Mammary epithelial cell (primary cell): ENCODE measurements at regions of chr16 and their contacts with region 1.

Region 1: DNA sequence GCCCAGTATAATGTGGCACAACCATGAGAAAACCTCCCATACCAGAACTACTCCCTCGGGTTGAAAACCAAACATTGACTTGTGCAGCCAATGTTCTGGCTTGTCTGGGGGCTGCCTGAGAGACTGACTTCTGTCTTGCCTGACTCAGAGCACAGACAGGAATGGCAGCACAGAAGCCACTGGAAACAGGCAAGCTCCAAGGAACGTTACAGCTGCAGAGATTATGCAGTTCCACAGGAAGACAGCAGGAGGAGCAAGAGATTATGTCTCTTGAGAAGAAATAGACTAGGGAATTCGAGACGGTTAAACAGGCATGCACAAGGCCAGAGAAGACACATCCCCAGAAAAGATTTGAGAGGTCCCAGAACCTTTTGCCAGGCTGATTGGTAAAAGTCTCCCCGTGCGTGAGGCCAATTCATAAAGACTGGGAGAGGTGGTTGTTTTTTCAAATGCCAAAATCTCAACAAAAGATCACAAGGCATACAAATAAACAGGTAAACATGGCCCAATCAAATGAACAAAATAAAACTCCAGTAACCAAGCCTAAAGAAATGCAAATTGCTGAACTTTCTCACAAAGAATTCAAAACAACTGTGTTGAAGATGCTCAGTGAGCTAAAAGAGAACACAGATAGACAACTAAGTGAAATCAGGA is 90.6 kb upstream of the CDH5 start:
- DNase-seq: peak; percentile 83
- H3K4me3 ChIP-seq: no peak overlapping the region
- H3K27ac ChIP-seq: no peak overlapping the region
- H3K4me1 ChIP-seq: peaks cover 52% of the 10 kb centered on the region
- H3K27me3 ChIP-seq: no peaks in the 10 kb centered on the region
- CTCF ChIP-seq: peak; percentile 82 to 84

Region 2: GRCh38 chr16:65884018-65884417 is 391.9 kb before region 1 on chr16:
- CTCF ChIA-PET with region 1: no interaction called
- dilution Hi-C with region 1: no loop called
- in situ Hi-C with region 1: no loop called
- intact Hi-C with region 1: loop called (anchors 5 kb)
- DNase-seq: peak; percentile 90
- H3K4me3 ChIP-seq: no peak overlapping the region
- H3K27ac ChIP-seq: peak overlapping the region; percentile 98
- H3K4me1 ChIP-seq: peaks cover 29% of the 10 kb centered on the region
- H3K27me3 ChIP-seq: no peaks in the 10 kb centered on the region
- CTCF ChIP-seq: no peak

Region 3: GRCh38 chr16:66315210-66315825 is 39.4 kb after region 1 on chr16:
- CTCF ChIA-PET with region 1: interaction called, 3 read pairs
- dilution Hi-C with region 1: no loop called
- in situ Hi-C with region 1: no loop called
- intact Hi-C with region 1: loop called (anchors 1 kb)
- DNase-seq: peak; percentile 38
- H3K4me3 ChIP-seq: no peak overlapping the region
- H3K27ac ChIP-seq: no peak overlapping the region
- H3K4me1 ChIP-seq: no peaks in the 10 kb centered on the region
- H3K27me3 ChIP-seq: no peaks in the 10 kb centered on the region
- CTCF ChIP-seq: peak; percentile 98 to 99

Region 4: GRCh38 chr16:66326991-66327513 is 51.1 kb after region 1 on chr16:
- CTCF ChIA-PET with region 1: no interaction called
- dilution Hi-C with region 1: no loop called
- in situ Hi-C with region 1: no loop called
- intact Hi-C with region 1: no loop called
- DNase-seq: no peak
- H3K4me3 ChIP-seq: no peak overlapping the region
- H3K27ac ChIP-seq: no peak overlapping the region
- H3K4me1 ChIP-seq: peaks cover 4% of the 10 kb centered on the region
- H3K27me3 ChIP-seq: no peaks in the 10 kb centered on the region
- CTCF ChIP-seq: no peak

Region 5: GRCh38 chr16:66344533-66345145 is 68.7 kb after region 1 on chr16:
- CTCF ChIA-PET with region 1: interaction called, 5 read pairs
- dilution Hi-C with region 1: no loop called
- in situ Hi-C with region 1: no loop called
- intact Hi-C with region 1: loop called (anchors 1 kb)
- DNase-seq: peak; percentile 18
- H3K4me3 ChIP-seq: no peak overlapping the region
- H3K27ac ChIP-seq: no peak overlapping the region
- H3K4me1 ChIP-seq: no peaks in the 10 kb centered on the region
- H3K27me3 ChIP-seq: no peaks in the 10 kb centered on the region
- CTCF ChIP-seq: peak; percentile 67 to 77

Region 6: GRCh38 chr16:66483689-66484481 is 208.0 kb after region 1 on chr16:
- CTCF ChIA-PET with region 1: no interaction called
- dilution Hi-C with region 1: no loop called
- in situ Hi-C with region 1: no loop called
- intact Hi-C with region 1: loop called (anchors 5 kb)
- DNase-seq: peak; percentile 51
- H3K4me3 ChIP-seq: no peak overlapping the region
- H3K27ac ChIP-seq: no peak overlapping the region
- H3K4me1 ChIP-seq: peaks cover 38% of the 10 kb centered on the region
- H3K27me3 ChIP-seq: no peaks in the 10 kb centered on the region
- CTCF ChIP-seq: peak; percentile 98 to 99

Region 7: GRCh38 chr16:66844342-66845079 is 568.6 kb after region 1 on chr16 and contains the start of gene CA7:
- CTCF ChIA-PET with region 1: no interaction called
- dilution Hi-C with region 1: no loop called
- in situ Hi-C with region 1: no loop called
- intact Hi-C with region 1: no loop called
- DNase-seq: no peak
- H3K4me3 ChIP-seq: peak within 1 kb of the TSS in 2 of 3 experiments; percentile 34 to 38
- H3K27ac ChIP-seq: no peak within 1 kb of the TSS
- H3K4me1 ChIP-seq: peaks cover 12% of the 10 kb centered on the region
- H3K27me3 ChIP-seq: peaks cover 15% of the 10 kb centered on the region
- CTCF ChIP-seq: no peak
- total RNA-seq, gene CA7: not detected